ENCODE measurements at regions of chr9 and their contacts with region 1.

Region 1: DNA sequence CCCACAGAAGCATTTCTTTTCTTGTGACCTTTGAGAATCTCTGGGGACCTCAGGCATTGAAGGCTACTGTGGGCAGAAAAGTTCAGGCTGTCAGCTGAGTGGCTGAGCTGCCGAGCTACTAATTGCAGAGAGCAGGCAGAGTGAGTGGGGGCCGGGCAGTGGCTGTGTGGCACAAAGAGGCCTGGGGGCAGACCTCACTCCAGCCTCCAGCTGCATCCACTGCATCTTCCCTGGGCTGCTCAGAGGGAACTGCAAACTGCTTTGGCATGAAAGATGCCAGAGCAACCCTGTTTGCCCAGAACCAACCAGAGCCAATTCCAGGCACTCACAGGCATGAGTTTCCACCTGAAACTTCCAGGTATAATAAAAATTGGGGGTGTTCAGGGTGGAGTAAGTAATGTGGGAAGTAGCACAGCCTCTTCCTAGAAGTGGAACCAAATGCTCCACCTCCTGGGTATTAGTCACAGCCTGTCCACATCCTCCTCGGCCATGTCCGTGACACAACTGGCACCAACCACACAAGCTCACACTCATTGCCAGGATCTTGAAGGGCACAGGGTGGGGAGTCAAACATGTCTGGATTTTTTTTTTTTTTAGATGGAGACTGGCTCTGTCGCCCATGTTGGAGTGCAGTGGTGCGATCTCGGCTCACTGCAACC is 548.9 kb downstream of the BNC2 start:
- DNase-seq: no peak
- ATAC-seq: no peak
- H3K4me3 ChIP-seq: no peak overlapping the region
- H3K4me3 Mint-ChIP-seq: no peak overlapping the region
- H3K27ac ChIP-seq: no peak overlapping the region
- H3K27ac Mint-ChIP-seq: no peak overlapping the region
- H3K4me1 ChIP-seq: no peaks in the 10 kb centered on the region
- H3K4me1 Mint-ChIP-seq: no peaks in the 10 kb centered on the region
- H3K27me3 ChIP-seq: no peaks in the 10 kb centered on the region
- H3K27me3 Mint-ChIP-seq: no peaks in the 10 kb centered on the region
- CTCF ChIP-seq: no peak

Region 2: DNA sequence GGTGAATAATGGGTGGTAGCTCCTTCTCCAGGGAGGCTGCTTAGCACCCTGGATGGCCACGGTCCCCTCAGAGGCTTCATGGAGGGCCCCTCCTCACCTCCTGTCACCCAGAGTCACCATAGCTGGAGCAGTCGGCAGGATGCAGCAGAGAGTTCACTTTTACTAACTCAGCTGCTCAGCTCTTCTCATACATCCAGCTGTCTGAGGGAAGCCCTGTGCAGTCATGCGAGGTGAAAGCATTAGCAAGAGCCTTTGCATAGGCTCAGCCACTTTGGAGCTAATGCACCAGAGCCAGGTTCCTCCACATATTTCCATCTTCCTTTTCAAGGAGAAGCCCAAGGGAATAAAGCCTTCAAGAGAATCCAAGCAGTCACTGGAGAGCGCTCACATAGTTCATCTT is 49.7 kb after region 1 on chr9:
- intact Hi-C with region 1: loop called (anchors 5 kb)
- DNase-seq: no peak
- ATAC-seq: no peak
- H3K4me3 ChIP-seq: no peak overlapping the region
- H3K4me3 Mint-ChIP-seq: no peak overlapping the region
- H3K27ac ChIP-seq: no peak overlapping the region
- H3K27ac Mint-ChIP-seq: no peak overlapping the region
- H3K4me1 ChIP-seq: no peaks in the 10 kb centered on the region
- H3K4me1 Mint-ChIP-seq: no peaks in the 10 kb centered on the region
- H3K27me3 ChIP-seq: no peaks in the 10 kb centered on the region
- H3K27me3 Mint-ChIP-seq: peaks cover 18 to 35% of the 10 kb centered on the region in 2 donors
- CTCF ChIP-seq: no peak

Measured in natural killer cell (primary cell).